ENCODE measurements at regions of chr2 and their contacts with region 1.

Region 1: GRCh38 chr2:227450926-227451654 is 20.9 kb upstream of the AGFG1 start:
- DNase-seq: peak; percentile 99
- ATAC-seq: peak; percentile 93
- H3K4me3 ChIP-seq: peak overlapping the region in 1 of 3 experiments; percentile 17; a peak in 1 of 6 replicates
- H3K27ac ChIP-seq: peak overlapping the region; percentile 90
- H3K4me1 ChIP-seq: peaks cover 84% of the 10 kb centered on the region
- H3K27me3 ChIP-seq: no peaks in the 10 kb centered on the region
- CTCF ChIP-seq: no peak
- EP300 ChIP-seq: peak; percentile 92 to 98
- POLR2A ChIP-seq: peak in 1 of 2 experiments; percentile 50; a peak in 1 of 4 replicates
- RAD21 ChIP-seq: no peak; the same call in 1 of the 2 replicates

Region 2: GRCh38 chr2:226862623-226863022 is 588.5 kb before region 1 on chr2:
- CTCF ChIA-PET with region 1: no interaction called
- POLR2A ChIA-PET with region 1: no interaction called
- in situ Hi-C with region 1: no loop called
- intact Hi-C with region 1: no loop called
- DNase-seq: no peak
- ATAC-seq: no peak
- H3K4me3 ChIP-seq: no peak overlapping the region
- H3K27ac ChIP-seq: no peak overlapping the region
- H3K4me1 ChIP-seq: no peaks in the 10 kb centered on the region
- H3K27me3 ChIP-seq: no peaks in the 10 kb centered on the region
- CTCF ChIP-seq: no peak
- EP300 ChIP-seq: no peak
- POLR2A ChIP-seq: no peak
- RAD21 ChIP-seq: no peak

Region 3: GRCh38 chr2:227464361-227464760 is 13.3 kb after region 1 on chr2:
- CTCF ChIA-PET with region 1: no interaction called
- POLR2A ChIA-PET with region 1: interaction called, 33 read pairs
- in situ Hi-C with region 1: no loop called
- intact Hi-C with region 1: loop called (anchors 1 kb)
- DNase-seq: no peak
- ATAC-seq: no peak
- H3K4me3 ChIP-seq: no peak overlapping the region
- H3K27ac ChIP-seq: no peak overlapping the region
- H3K4me1 ChIP-seq: peaks cover 71% of the 10 kb centered on the region
- H3K27me3 ChIP-seq: no peaks in the 10 kb centered on the region
- CTCF ChIP-seq: no peak
- EP300 ChIP-seq: no peak
- POLR2A ChIP-seq: no peak
- RAD21 ChIP-seq: no peak

Region 4: DNA sequence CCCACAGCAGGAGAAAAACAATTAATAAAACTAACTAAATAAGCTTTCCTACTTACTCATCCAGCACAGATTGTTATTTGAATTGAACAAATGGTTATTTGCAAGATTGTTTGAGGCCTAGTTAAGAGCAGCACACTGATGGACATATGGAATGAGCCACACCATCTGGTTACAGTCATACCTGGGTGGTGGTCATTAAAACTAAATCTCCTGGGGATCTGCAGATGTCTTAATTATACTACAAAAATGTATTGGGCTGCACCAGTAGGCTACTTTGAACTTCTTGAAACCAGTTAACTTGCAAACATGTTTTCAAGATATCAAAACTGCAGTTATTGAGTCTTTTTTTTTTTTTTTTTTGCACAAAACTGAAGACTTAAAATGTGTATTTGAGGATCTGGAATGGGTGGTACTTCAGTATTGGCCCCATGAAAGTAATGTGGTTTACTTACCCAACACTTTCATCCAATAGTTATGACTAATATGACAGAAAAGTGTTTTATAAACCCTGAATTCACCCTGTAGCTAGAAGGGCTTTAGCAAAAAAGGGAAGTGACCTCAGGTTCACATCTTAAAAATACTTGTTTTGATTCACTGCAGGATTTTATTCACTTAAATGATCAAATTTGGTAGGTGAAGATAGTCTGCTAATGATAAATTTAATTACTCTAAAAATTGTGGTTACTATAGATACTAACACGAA is 31.7 kb after region 1 on chr2:
- CTCF ChIA-PET with region 1: no interaction called
- POLR2A ChIA-PET with region 1: no interaction called
- in situ Hi-C with region 1: no loop called
- intact Hi-C with region 1: no loop called
- DNase-seq: no peak
- ATAC-seq: no peak
- H3K4me3 ChIP-seq: no peak overlapping the region
- H3K27ac ChIP-seq: no peak overlapping the region
- H3K4me1 ChIP-seq: peaks cover 28% of the 10 kb centered on the region
- H3K27me3 ChIP-seq: no peaks in the 10 kb centered on the region
- CTCF ChIP-seq: no peak
- EP300 ChIP-seq: no peak
- POLR2A ChIP-seq: no peak
- RAD21 ChIP-seq: no peak